GM23248 (cell line): ENCODE measurements at regions of chr22 and their contacts with region 1.

Region 1: GRCh38 chr22:46122511-46122971 is 27.8 kb upstream of the PPARA start:
- DNase-seq: peak; percentile 80
- H3K4me3 ChIP-seq: no peak overlapping the region
- H3K27ac ChIP-seq: no peak overlapping the region
- H3K4me1 ChIP-seq: peaks cover 5% of the 10 kb centered on the region; the same call in 1 of the 2 replicates
- H3K27me3 ChIP-seq: no peaks in the 10 kb centered on the region

Region 2: DNA sequence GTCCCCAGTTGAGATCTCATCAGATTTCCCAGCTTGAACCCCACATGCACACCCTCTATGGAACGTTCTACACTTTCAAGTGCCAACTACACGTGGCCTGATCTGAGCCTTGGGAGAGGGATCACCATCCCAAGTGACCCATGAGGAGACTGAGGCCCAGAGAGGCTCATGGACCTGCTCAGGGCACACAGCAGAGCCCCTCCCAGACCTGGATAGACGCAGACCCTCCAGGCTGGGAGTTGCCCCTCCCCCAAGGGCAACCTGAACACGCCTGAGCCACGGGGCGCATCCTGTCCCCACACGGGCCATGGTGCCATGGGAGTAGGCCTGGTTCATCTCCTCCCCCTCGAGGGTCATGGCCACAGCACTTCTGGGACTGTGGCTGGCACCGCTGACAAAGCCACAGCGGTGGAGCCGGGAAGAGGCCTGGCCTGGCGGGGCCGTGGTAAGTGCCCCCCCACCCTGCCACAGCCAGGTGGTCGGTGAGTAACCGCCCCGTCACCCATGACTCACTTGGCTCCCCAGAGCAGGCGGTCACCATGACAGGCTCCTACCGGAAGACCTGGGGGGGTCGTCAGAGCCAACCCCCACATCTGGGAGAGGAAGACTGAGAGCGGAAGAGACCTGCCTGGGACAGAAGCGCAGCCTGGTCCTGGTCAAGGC is 153.7 kb before region 1 on chr22:
- in situ Hi-C with region 1: no loop called
- DNase-seq: peak; percentile 80
- H3K4me3 ChIP-seq: no peak overlapping the region
- H3K27ac ChIP-seq: no peak overlapping the region
- H3K4me1 ChIP-seq: peaks cover 27% of the 10 kb centered on the region
- H3K27me3 ChIP-seq: peaks cover 23% of the 10 kb centered on the region

Region 3: DNA sequence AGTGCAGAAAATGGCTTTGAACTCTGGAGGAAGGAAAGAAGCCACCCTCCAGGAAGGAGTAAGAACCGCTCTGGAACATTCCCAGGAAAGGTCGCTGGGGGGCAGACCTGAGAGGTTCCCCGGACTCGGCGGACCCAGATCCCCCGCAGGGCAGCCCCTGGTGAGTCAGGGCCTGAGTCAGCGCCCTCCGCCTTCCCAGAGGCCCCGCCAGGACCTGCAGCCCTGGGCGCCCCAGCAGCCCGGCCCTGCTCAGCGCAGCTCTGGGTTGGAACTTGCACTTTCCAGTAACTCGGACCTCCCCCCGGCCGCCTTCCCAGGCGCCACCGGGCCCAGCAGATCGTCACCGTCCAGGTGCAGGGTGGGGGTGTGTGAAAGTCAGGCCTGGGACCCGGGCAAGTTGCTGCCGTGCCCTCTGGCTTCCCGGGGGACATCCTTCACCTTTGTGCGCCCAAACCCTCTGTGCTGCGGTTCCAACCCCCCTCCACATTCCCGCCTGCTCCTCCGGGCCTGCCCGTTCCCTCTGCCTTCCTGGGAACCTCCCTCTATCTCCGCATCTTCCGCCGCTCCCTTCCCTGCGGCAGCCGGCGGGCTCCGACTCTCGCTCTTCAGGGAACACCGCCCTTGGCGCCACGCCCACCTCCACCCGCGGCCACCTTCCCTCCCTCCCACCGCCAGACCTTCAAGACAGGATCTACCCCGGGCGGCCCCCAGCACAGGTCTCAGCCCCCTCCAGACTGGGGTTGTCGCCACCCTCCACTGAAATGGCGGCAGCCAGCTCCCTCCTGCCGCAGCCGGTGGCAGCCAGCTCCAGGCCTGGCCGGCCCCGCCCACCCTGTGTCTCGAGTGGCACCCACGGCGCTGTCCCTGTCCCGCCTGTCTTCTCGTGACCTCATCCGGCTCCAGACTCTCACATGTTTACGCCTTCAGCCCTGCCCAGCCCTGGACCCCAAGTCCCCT is 108.8 kb before region 1 on chr22:
- in situ Hi-C with region 1: no loop called
- DNase-seq: peak; percentile 99
- H3K4me3 ChIP-seq: peak overlapping the region; percentile 77
- H3K27ac ChIP-seq: peak overlapping the region; percentile 98
- H3K4me1 ChIP-seq: peaks cover 32% of the 10 kb centered on the region
- H3K27me3 ChIP-seq: no peaks in the 10 kb centered on the region

Region 4: DNA sequence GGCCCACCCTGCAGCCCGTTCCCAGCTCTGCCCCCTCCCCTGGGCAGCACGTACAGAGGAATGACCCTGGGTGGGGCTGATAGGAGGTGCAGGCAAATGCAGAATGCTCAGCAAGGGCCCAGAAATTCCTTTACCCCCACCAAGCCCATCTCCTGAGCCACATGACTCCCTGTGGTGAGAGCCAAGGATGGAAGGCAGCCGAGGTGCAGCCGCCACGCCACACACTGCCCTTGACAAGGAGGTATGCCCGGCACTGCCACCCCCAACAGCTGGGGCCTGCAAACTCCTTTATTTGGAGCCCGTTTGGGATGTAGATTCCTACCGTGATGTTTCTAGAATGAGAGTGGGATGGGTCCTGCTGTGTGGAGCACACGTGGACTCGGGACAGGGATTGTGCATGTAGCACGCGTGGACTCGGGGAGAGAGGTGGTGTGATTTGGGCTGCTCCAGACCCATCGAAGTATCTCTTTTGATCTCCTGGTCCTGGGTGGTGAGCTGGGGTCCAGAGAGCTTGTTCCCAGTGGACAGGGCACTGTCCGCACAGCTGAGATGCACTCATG is 187.1 kb after region 1 on chr22:
- in situ Hi-C with region 1: loop called (anchors 5 kb)
- DNase-seq: no peak
- H3K4me3 ChIP-seq: no peak overlapping the region
- H3K27ac ChIP-seq: no peak overlapping the region
- H3K4me1 ChIP-seq: no peaks in the 10 kb centered on the region
- H3K27me3 ChIP-seq: no peaks in the 10 kb centered on the region